Activated B cell treated with CpG ODN at 0.5 μM for 24 hours (primary cell): ENCODE measurements at regions of chr12 and their contacts with region 1.

Region 1: GRCh38 chr12:57462251-57462911 is 2.8 kb downstream of the GLI1 start:
- DNase-seq: peak; percentile 84
- ATAC-seq: peak; percentile 72
- H3K4me3 Mint-ChIP-seq: peak overlapping the region; percentile 97
- H3K27ac Mint-ChIP-seq: peak overlapping the region; percentile 93
- H3K4me1 Mint-ChIP-seq: peaks cover 60% of the 10 kb centered on the region
- H3K27me3 Mint-ChIP-seq: no peaks in the 10 kb centered on the region
- CTCF ChIP-seq: peak; percentile 85

Region 2: DNA sequence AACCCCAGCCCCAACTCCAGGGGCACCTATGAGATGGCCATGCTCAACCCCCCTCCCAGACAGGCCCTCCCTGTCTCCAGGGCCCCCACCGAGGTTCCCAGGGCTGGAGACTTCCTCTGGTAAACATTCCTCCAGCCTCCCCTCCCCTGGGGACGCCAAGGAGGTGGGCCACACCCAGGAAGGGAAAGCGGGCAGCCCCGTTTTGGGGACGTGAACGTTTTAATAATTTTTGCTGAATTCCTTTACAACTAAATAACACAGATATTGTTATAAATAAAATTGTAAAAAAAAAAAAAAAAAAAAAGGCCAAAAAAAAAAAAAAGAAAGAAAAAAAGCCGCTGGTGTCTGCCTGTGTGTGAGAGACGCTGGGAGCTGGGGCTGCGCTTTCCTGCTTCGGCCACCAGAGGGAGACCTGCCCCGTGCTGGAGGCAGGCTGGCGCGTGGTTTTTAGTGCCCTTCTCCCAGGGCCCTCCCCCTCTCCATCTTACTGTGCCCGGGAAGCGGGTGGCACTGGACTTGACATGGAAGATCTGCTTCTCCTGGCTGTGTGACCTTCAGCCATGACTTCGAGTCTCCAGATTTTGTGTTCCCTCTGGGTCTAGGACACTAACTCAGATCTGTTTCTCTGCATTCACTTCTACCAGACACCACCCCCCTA is 249.2 kb before region 1 on chr12:
- CTCF ChIA-PET with region 1: no interaction called
- POLR2A ChIA-PET with region 1: interaction called, 3 read pairs
- intact Hi-C with region 1: loop called (anchors 2 kb)
- DNase-seq: peak; percentile 75
- ATAC-seq: peak; percentile 49
- H3K4me3 Mint-ChIP-seq: peak overlapping the region; percentile 13
- H3K27ac Mint-ChIP-seq: peak overlapping the region; percentile 47
- H3K4me1 Mint-ChIP-seq: peaks cover 44% of the 10 kb centered on the region
- H3K27me3 Mint-ChIP-seq: peaks cover 13% of the 10 kb centered on the region
- CTCF ChIP-seq: peak; percentile 30

Region 3: GRCh38 chr12:57342207-57342691 is 120.1 kb before region 1 on chr12:
- CTCF ChIA-PET with region 1: no interaction called
- POLR2A ChIA-PET with region 1: no interaction called
- intact Hi-C with region 1: no loop called
- DNase-seq: no peak
- ATAC-seq: no peak
- H3K4me3 Mint-ChIP-seq: no peak overlapping the region
- H3K27ac Mint-ChIP-seq: no peak overlapping the region
- H3K4me1 Mint-ChIP-seq: peaks cover 7% of the 10 kb centered on the region
- H3K27me3 Mint-ChIP-seq: no peaks in the 10 kb centered on the region
- CTCF ChIP-seq: no peak

Region 4: GRCh38 chr12:57430931-57431720 is 31.3 kb before region 1 on chr12 and contains the start of gene R3HDM2:
- CTCF ChIA-PET with region 1: interaction called, 3 read pairs
- POLR2A ChIA-PET with region 1: interaction called, 15 read pairs
- intact Hi-C with region 1: loop called (anchors 1 kb)
- DNase-seq: peak; percentile 94
- ATAC-seq: peak; percentile 91
- H3K4me3 Mint-ChIP-seq: peak within 1 kb of the TSS; percentile 97
- H3K27ac Mint-ChIP-seq: peak within 1 kb of the TSS; percentile 99
- H3K4me1 Mint-ChIP-seq: peaks cover 39% of the 10 kb centered on the region
- H3K27me3 Mint-ChIP-seq: no peaks in the 10 kb centered on the region
- CTCF ChIP-seq: no peak
- total RNA-seq, gene R3HDM2: 74.2 and 75.6 TPM in 2 replicates

Region 5: DNA sequence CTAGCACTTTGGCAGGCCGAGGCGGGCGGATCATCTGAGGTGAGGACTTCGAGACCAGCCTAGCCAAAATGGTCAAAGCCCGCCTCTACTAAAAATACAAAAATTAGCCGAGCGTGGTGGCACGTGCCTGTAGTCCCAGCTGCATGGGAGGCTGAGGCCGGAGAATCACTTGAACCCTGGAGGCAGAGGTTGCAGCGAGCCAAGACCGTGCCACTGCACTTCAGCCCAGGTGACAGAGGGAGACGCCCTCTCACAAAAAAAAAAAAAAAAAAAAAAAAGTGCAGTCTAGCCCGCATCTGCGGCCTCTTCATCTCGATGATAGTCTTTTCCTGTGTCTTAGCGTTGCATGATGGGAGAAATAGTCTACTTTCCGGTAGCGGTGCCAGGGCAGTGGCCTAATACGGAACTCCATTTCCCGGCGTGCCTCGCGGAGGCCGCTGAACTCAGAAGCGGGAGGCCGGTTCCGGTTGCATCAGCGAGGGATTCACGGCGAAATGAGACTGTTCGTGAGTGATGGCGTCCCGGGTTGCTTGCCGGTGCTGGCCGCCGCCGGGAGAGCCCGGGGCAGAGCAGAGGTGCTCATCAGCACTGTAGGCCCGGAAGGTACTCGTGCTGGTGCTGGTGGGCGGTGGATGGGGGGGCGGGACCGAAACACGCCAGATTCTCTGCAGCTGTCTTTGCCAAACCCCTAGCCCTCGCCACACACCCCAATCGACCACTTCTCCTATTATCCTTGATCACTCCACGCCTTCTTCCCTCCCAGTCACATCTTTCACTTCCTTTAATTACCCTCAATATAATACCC is 25.4 kb after region 1 on chr12 and contains the start of gene MARS1:
- CTCF ChIA-PET with region 1: interaction called, 7 read pairs
- POLR2A ChIA-PET with region 1: interaction called, 7 read pairs
- intact Hi-C with region 1: loop called (anchors 1 kb)
- DNase-seq: peak; percentile 83
- ATAC-seq: peak; percentile 97
- H3K4me3 Mint-ChIP-seq: peak within 1 kb of the TSS; percentile 97
- H3K27ac Mint-ChIP-seq: peak within 1 kb of the TSS; percentile 97
- H3K4me1 Mint-ChIP-seq: peaks cover 41% of the 10 kb centered on the region
- H3K27me3 Mint-ChIP-seq: no peaks in the 10 kb centered on the region
- CTCF ChIP-seq: no peak
- total RNA-seq, gene MARS1: 368 and 425 TPM in 2 replicates

Region 6: DNA sequence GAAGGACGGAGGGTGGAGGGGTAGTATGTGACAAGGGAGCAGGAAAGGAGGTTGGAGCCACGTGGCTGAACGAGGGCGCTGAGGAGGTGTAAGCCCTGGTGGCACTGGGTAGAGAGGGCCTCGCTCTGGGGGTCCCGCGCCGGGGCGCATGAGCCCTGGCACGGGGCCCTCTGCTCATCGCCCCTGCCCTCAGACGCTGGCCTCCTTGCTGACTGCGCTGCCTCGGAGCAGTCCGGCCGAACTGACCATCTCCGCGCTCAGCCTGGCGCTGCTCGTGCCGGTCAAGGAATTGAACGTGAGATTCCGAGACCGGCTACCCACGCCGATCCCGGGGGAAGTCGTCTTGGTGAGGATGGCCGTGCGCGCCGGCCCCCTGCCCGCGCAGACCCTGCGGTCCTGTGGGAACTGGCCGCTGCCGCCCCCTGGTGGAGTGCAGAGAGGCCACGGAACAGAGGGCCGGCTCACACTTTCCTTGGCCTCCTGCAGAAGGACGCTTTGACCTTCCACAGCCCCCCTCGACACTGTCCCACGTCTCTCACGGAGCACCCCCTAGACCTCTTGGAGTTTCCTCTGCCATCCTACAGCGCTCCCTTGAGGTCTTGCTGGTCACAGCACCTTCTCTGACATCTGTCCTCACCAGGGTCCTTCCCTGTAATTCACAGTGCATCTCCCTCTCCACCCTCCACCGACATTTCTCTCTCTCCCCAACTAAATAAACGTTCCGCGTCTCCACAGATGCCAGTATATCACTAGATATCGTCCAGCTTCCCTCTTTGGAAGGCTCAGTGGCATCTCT is 159.3 kb after region 1 on chr12:
- CTCF ChIA-PET with region 1: interaction called, 13 read pairs
- POLR2A ChIA-PET with region 1: no interaction called
- intact Hi-C with region 1: loop called (anchors 1 kb)
- DNase-seq: peak; percentile 64
- ATAC-seq: peak; percentile 75
- H3K4me3 Mint-ChIP-seq: peak overlapping the region; percentile 77
- H3K27ac Mint-ChIP-seq: no peak overlapping the region
- H3K4me1 Mint-ChIP-seq: peaks cover 35% of the 10 kb centered on the region
- H3K27me3 Mint-ChIP-seq: peaks cover 82% of the 10 kb centered on the region
- CTCF ChIP-seq: no peak

Region 7: DNA sequence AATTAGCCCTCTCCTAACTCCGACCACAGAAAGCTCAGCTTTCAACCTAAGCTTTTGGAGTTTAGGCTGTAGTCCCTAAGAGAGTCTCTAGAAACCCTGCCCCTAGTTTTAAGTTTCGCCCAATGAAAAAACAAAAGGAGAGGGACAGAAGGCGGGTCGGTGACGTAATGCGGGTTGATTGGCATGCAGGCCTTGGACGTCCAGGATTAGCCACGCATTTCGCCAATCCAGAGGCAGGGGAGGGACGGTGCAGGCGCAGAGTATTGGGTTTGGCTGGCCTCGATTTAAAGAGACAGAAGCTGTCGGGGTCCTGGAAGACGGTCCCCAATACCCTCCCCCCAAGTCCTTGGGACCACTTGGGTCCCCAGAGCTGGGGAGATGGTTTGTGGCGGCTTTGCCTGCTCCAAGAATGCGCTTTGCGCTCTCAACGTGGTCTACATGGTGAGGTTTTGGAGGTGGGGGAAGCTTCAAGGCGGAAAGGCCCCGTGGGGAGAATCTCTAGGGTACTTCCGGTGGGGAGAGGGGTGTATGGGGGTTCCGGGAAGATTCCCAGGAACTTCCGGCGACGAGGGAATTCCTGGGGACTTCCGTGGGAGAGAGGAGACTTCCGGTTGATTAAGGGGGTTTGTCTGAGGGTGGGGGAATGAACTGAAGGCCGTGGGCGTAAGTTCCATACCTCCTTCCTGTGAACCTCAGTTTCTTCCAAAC is 282.6 kb after region 1 on chr12 and contains the start of gene TSPAN31:
- CTCF ChIA-PET with region 1: no interaction called
- POLR2A ChIA-PET with region 1: no interaction called
- intact Hi-C with region 1: loop called (anchors 5 kb)
- DNase-seq: peak; percentile 81
- ATAC-seq: peak; percentile 87
- H3K4me3 Mint-ChIP-seq: peak within 1 kb of the TSS; percentile 86
- H3K27ac Mint-ChIP-seq: peak within 1 kb of the TSS; percentile 89
- H3K4me1 Mint-ChIP-seq: peaks cover 53% of the 10 kb centered on the region
- H3K27me3 Mint-ChIP-seq: no peaks in the 10 kb centered on the region
- CTCF ChIP-seq: no peak
- total RNA-seq, gene TSPAN31: 35.8 and 37.6 TPM in 2 replicates